ENCODE measurements at regions of chr18 and their contacts with region 1.

Region 1: GRCh38 chr18:56748698-56749268 is 97.6 kb downstream of the WDR7 start:
- DNase-seq: no peak
- ATAC-seq: no peak
- H3K4me3 Mint-ChIP-seq: no peak overlapping the region
- H3K27ac Mint-ChIP-seq: no peak overlapping the region
- H3K4me1 Mint-ChIP-seq: peaks cover 24% of the 10 kb centered on the region
- H3K27me3 Mint-ChIP-seq: no peaks in the 10 kb centered on the region

Region 2: DNA sequence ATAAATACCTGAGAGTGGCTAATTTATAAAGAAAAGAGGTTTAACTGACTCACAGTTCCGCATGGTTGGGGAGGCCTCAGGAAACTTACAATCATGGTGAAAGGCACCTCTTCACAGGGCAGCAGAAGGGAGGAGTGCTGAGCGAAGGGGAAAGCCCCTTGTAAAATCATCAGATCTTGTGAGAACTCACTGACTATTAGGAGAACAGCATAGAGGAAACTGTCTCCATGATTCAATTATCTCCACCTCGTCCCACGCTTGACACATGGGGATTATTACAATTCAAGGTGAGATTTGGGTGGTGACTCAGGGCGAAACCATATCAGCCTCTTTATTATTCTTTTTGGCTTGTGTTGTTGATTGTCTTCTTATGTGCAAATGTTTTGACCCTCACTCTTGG is 21.4 kb before region 1 on chr18:
- CTCF ChIA-PET with region 1: no interaction called
- POLR2A ChIA-PET with region 1: no interaction called
- intact Hi-C with region 1: loop called in 1 of 2 experiments (anchors 1 kb)
- DNase-seq: peak; percentile 68
- ATAC-seq: peak; percentile 100
- H3K4me3 Mint-ChIP-seq: no peak overlapping the region
- H3K27ac Mint-ChIP-seq: peak overlapping the region; percentile 32
- H3K4me1 Mint-ChIP-seq: peaks cover 17% of the 10 kb centered on the region
- H3K27me3 Mint-ChIP-seq: no peaks in the 10 kb centered on the region

Region 3: DNA sequence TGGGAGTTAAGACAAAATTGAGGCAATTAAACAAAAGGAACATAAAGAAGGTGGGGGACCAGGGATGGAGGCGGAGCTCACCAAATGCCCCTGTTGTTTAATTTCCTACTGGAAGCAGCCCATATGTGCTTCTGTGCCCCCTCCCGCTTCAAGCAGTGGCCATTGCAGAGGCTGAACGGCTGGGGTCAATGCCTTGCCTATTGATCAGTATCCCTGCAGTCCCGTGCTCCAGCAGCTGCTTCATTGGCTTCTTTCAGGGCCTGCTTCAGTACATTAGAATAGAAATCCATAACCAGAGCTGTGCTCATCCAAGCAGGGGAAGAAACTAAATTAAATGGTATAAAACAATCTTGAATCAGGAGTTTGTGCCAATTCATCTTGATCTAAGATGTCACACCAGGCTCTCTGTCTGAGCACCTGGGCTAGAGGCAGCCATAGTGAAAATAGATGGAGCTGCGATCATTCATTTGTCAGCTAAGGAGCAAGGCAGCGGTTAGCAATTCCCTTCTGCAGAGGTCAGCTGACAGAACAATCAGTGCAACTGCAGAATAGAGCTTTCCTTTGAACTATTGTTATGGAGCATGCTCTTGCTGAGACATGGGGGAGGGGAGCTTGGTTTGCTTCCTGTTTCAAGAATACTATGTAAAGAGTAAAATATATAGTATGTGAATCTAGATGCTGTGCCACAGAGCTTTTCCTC is 124.8 kb after region 1 on chr18:
- CTCF ChIA-PET with region 1: no interaction called
- POLR2A ChIA-PET with region 1: no interaction called
- intact Hi-C with region 1: no loop called
- DNase-seq: peak; percentile 13
- ATAC-seq: peak; percentile 33
- H3K4me3 Mint-ChIP-seq: no peak overlapping the region
- H3K27ac Mint-ChIP-seq: no peak overlapping the region
- H3K4me1 Mint-ChIP-seq: peaks cover 15% of the 10 kb centered on the region
- H3K27me3 Mint-ChIP-seq: no peaks in the 10 kb centered on the region

Region 4: DNA sequence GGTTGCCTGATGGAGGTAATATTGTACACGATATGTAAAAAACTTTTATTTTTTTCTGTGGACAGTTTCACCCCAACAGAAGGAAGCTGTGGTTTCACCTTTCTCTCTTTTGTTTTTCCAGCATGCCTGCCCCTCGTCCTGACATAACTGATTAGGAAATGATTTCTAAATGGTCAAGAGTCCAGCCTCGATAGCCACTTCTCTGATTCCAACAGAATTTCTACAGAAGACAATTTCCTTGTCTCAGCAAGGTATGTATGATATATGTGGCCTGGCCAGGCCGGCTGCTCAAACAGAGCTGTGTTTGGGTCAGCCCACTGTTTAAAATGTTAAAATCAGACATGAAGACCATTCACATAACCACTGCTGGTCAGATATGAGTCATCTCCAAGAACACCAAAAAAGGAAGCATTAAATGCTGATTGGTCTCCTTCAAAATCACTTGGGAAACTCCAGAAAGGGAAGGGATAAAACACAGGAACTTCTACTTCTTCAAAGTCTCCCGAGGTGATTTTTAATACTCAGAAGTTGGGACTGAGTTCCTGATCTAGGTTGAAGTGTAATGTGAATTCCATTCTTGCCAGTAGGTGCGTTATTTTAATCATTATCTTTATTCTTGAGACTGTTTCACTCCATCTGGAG is 1032.0 kb after region 1 on chr18:
- CTCF ChIA-PET with region 1: no interaction called
- POLR2A ChIA-PET with region 1: no interaction called
- intact Hi-C with region 1: no loop called
- DNase-seq: no peak
- ATAC-seq: no peak
- H3K4me3 Mint-ChIP-seq: no peak overlapping the region
- H3K27ac Mint-ChIP-seq: no peak overlapping the region
- H3K4me1 Mint-ChIP-seq: peaks cover 5% of the 10 kb centered on the region
- H3K27me3 Mint-ChIP-seq: no peaks in the 10 kb centered on the region